Heart right ventricle (tissue), 16 donors: ENCODE measurements at regions of chr7 and their contacts with region 1.

Region 1: GRCh38 chr7:158957921-158958491 is 101.6 kb downstream of the DYNC2I1 start:
- DNase-seq: no peak
- ATAC-seq: peak in 5 of 8 donors; percentile 25 to 81 (median 34)
- H3K4me3 ChIP-seq: peak overlapping the region in 6 of 10 donors; percentile 5 to 26 (median 15)
- H3K27ac ChIP-seq: no peak overlapping the region
- H3K4me1 ChIP-seq: peaks cover 2 to 17% (median 13%) of the 10 kb centered on the region in 9 donors
- H3K27me3 ChIP-seq: peaks cover 0 to 29% (median 22%) of the 10 kb centered on the region in 7 donors
- CTCF ChIP-seq: no peak

Region 2: DNA sequence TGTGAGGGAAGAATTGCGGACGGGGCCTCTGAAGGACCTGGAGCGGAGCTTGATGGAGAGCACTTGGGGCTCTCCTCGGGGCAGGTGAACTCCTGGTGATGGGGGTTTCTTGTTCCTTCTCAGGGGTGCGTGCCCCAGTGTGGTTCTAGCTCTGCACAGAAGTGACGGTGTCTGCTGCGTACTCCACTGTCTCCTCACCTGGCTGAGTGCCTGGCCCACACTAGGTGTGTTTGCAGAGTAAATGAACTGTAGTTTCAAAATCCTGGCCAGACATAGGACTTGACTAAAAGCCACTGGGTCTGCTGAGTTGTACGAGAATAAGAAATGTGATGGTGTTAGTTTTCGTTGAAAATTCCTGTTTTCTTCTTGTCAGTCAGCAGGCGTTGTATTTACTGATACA is 66.1 kb before region 1 on chr7:
- intact Hi-C with region 1: loop called in 1 of 10 experiments (anchors 10 kb)
- DNase-seq: no peak
- ATAC-seq: no peak
- H3K4me3 ChIP-seq: no peak overlapping the region
- H3K27ac ChIP-seq: no peak overlapping the region
- H3K4me1 ChIP-seq: peaks cover 0 to 6% (median 0%) of the 10 kb centered on the region in 9 donors
- H3K27me3 ChIP-seq: no peaks in the 10 kb centered on the region
- CTCF ChIP-seq: no peak

Region 3: DNA sequence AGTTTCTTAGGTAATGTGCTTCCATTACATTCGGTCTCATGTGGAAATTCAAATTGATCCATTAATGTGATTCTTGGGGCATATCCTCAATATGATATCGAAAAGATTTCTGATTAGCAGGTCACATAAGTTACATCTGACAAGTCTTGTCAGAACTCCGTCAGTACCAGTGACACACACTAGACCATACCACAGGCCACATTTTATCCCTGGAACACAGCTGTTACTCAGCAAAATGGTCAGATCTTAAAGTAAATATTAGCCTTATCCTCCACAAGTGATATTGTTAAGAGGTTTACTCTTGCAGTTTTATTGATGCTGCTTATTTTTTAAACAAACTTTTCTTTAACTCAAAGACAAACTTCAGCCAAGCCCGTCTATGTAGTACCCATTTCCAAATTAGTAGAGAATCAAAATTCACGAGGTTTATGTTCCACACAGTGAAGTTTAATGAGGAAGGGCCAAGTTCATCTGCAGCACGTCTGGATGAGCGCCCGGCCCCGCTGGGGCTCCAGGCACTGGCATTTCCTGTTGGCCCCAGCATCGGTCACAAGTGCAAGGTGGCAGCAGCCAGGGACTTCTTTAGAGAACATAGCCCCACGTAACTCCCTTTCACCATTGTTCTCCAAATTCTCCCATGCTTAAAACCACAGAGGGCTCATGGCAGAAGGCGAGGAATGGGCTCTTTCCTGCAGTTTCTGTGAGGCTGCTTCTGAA is 54.5 kb after region 1 on chr7:
- intact Hi-C with region 1: no loop called
- DNase-seq: peak; percentile 72 to 73
- ATAC-seq: peak; percentile 40 to 80 (median 66)
- H3K4me3 ChIP-seq: no peak overlapping the region
- H3K27ac ChIP-seq: peak overlapping the region; percentile 40 to 93 (median 82)
- H3K4me1 ChIP-seq: peaks cover 0 to 53% (median 30%) of the 10 kb centered on the region in 9 donors
- H3K27me3 ChIP-seq: no peaks in the 10 kb centered on the region
- CTCF ChIP-seq: no peak